ENCODE measurements at regions of chr10 and their contacts with region 1.

Region 1: GRCh38 chr10:5623081-5623748 is 43.2 kb downstream of the ASB13 start:
- DNase-seq: peak; percentile 74
- ATAC-seq: peak; percentile 99
- H3K4me3 ChIP-seq: no peak overlapping the region
- H3K27ac ChIP-seq: peak overlapping the region; percentile 34; the same call in 1 of the 2 replicates
- H3K4me1 ChIP-seq: peaks cover 2% of the 10 kb centered on the region
- H3K27me3 ChIP-seq: no peaks in the 10 kb centered on the region
- CTCF ChIP-seq: peak; percentile 90
- POLR2A ChIP-seq: 0 out of 2 replicates have a peak, but pooled peaks have one; percentile 44
- RAD21 ChIP-seq: peak; percentile 99

Region 2: GRCh38 chr10:4819707-4820106 is 803.5 kb before region 1 on chr10:
- CTCF ChIA-PET with region 1: no interaction called
- POLR2A ChIA-PET with region 1: no interaction called
- dilution Hi-C with region 1: no loop called
- in situ Hi-C with region 1: no loop called
- intact Hi-C with region 1: loop called (anchors 5 kb)
- DNase-seq: no peak
- ATAC-seq: no peak
- H3K4me3 ChIP-seq: no peak overlapping the region
- H3K27ac ChIP-seq: no peak overlapping the region
- H3K4me1 ChIP-seq: no peaks in the 10 kb centered on the region
- H3K27me3 ChIP-seq: no peaks in the 10 kb centered on the region
- CTCF ChIP-seq: no peak
- POLR2A ChIP-seq: no peak
- RAD21 ChIP-seq: no peak

Region 3: DNA sequence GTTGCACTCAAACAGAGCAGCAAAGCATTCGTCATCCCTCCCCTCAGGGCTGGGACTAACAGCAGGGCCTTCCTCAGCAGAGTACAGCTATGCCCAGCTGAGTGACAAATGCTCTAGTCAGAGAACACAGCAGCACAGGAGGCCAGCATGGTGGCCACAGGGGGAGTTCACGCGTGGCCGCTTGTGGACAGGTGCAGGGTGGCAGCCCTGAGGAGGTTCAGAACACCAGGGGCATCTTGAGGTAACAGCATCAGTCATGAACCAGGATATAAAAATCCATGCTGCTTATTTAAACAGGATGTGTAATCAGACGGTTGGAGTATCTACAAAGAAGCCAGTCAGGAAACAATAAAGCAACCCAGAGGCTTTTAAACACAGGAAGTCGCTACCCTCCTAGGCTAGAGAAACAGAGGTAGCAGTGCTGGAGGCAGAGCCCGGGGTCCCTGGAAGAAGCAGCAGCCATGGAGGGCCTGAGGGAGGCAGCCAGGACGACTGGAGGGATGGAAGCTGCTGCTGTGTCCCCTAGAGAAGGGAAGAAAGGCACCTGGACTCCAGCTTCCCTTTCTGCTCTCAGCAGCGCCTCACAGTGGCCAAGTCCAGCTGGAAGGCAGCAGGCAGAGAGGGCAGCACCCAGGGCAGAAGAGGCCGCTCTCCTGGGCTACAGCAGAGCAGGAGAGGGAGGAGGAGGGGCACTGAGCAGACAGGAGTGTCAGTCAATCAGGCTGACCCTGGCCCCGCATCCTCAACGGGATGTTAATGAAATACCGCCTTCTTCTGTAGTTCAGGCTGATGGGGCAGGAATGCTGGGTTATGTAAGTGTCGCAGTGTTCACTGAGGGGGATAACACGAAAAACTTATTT is 329.3 kb before region 1 on chr10:
- CTCF ChIA-PET with region 1: no interaction called
- POLR2A ChIA-PET with region 1: no interaction called
- dilution Hi-C with region 1: no loop called
- in situ Hi-C with region 1: no loop called
- intact Hi-C with region 1: loop called (anchors 10 kb)
- DNase-seq: peak; percentile 33
- ATAC-seq: peak; percentile 62
- H3K4me3 ChIP-seq: no peak overlapping the region
- H3K27ac ChIP-seq: no peak overlapping the region
- H3K4me1 ChIP-seq: peaks cover 8% of the 10 kb centered on the region
- H3K27me3 ChIP-seq: 0 out of 2 replicates have a peak, but pooled peaks cover 1% of the 10 kb centered on the region
- CTCF ChIP-seq: peak; percentile 32
- POLR2A ChIP-seq: no peak
- RAD21 ChIP-seq: peak; percentile 17; the same call in 1 of the 2 replicates

Region 4: DNA sequence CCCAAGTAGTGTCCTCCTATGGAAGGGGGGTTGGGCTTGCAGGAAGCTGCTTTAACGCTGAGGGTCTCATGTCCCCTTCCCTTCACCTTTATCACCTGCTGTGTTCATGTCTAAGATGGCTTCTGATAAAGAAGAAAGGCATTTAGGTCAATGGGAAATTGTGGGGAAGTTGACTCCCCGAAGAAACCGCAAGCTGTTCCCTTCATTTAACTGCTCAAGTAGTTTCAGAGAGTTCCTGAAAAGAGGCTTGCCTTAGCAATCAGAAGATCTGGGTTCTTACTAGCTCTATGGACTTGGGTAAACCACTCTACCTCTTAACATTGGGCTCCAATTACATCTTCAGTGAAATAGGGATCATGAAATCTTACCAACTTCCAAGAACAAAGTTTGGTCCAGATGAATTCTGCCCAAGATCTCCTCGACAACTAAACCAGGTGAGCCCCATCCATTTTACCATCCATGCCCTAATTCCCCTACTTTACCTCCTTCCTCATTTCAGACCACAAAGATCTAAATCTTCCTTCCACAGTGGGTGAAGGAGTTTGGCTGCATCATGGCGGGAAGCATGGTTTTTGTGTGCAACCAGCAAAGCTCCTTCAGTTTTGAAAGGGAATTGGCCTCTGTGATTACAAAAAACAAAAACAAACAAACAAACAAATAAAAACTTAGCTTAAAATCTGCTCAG is 288.9 kb before region 1 on chr10:
- CTCF ChIA-PET with region 1: no interaction called
- POLR2A ChIA-PET with region 1: no interaction called
- dilution Hi-C with region 1: no loop called
- in situ Hi-C with region 1: no loop called
- intact Hi-C with region 1: no loop called
- DNase-seq: no peak
- ATAC-seq: no peak
- H3K4me3 ChIP-seq: no peak overlapping the region
- H3K27ac ChIP-seq: no peak overlapping the region
- H3K4me1 ChIP-seq: no peaks in the 10 kb centered on the region
- H3K27me3 ChIP-seq: no peaks in the 10 kb centered on the region
- CTCF ChIP-seq: no peak
- POLR2A ChIP-seq: no peak
- RAD21 ChIP-seq: no peak

Region 5: GRCh38 chr10:5385224-5385623 is 238.0 kb before region 1 on chr10:
- CTCF ChIA-PET with region 1: no interaction called
- POLR2A ChIA-PET with region 1: no interaction called
- dilution Hi-C with region 1: no loop called
- in situ Hi-C with region 1: no loop called
- intact Hi-C with region 1: loop called (anchors 5 kb)
- DNase-seq: no peak
- ATAC-seq: no peak
- H3K4me3 ChIP-seq: no peak overlapping the region
- H3K27ac ChIP-seq: no peak overlapping the region
- H3K4me1 ChIP-seq: no peaks in the 10 kb centered on the region
- H3K27me3 ChIP-seq: peaks cover 7% of the 10 kb centered on the region
- CTCF ChIP-seq: no peak
- POLR2A ChIP-seq: no peak
- RAD21 ChIP-seq: no peak

Region 6: DNA sequence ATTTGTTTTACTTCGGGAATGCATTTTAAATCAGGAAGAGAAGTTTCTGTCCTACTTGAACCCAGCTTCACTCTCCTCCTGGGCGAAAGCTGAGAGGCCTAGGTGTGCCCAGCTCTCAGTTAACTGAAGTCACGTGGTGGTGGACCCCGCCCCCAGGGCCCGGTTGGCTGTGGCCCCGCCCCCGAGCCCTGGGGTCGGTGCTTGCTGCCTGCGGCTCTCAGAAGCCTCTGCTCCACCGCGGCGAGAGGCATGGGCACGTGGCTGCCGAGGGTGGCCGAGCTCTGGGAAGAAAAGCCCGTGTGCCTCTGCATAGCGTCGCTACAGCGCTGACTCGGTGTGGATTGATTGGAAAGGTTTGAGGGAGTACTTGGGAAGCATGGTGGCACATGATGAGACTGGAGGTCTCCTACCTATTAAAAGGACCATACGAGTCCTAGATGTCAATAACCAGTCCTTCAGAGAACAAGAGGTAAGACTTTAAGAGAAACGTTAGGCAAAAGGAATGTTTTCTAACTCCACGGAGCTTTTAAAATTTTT is 176.8 kb before region 1 on chr10:
- CTCF ChIA-PET with region 1: interaction called, 48 read pairs
- POLR2A ChIA-PET with region 1: interaction called, 3 read pairs
- dilution Hi-C with region 1: no loop called
- in situ Hi-C with region 1: loop called (anchors 5 kb)
- intact Hi-C with region 1: loop called (anchors 1 kb)
- DNase-seq: peak; percentile 84
- ATAC-seq: peak; percentile 91
- H3K4me3 ChIP-seq: peak overlapping the region; percentile 64
- H3K27ac ChIP-seq: peak overlapping the region; percentile 74
- H3K4me1 ChIP-seq: peaks cover 5% of the 10 kb centered on the region; the same call in 1 of the 2 replicates
- H3K27me3 ChIP-seq: no peaks in the 10 kb centered on the region
- CTCF ChIP-seq: no peak
- POLR2A ChIP-seq: peak; percentile 98
- RAD21 ChIP-seq: peak; percentile 5; the same call in 1 of the 2 replicates

Region 7: GRCh38 chr10:5548527-5549223 is 74.5 kb before region 1 on chr10:
- CTCF ChIA-PET with region 1: interaction called, 5 read pairs
- POLR2A ChIA-PET with region 1: no interaction called
- dilution Hi-C with region 1: no loop called
- in situ Hi-C with region 1: no loop called
- intact Hi-C with region 1: loop called (anchors 5 kb)
- DNase-seq: peak; percentile 99
- ATAC-seq: peak; percentile 76
- H3K4me3 ChIP-seq: no peak overlapping the region
- H3K27ac ChIP-seq: peak overlapping the region; percentile 82
- H3K4me1 ChIP-seq: peaks cover 52% of the 10 kb centered on the region
- H3K27me3 ChIP-seq: no peaks in the 10 kb centered on the region
- CTCF ChIP-seq: no peak
- POLR2A ChIP-seq: no peak; the same call in 1 of the 2 replicates
- RAD21 ChIP-seq: no peak

Region 8: DNA sequence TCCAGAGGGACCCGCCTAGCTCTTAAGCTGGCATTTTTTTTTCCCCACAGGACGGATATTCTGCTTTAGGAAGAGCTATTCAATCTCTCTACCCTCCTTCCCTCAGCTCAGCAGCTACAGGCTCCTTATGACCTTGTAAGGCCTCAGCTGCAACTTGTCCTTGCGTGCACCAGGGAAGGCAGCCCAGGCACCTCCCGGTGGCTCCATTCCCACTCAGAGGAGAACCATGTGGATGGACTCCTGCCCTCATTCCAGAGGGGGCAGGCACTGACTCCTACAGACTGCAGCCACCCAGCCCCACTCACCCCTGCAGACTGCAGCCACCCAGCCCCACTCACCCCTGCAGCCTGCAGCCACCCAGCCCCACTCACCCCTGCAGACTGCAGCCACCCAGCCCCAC is 1969.8 kb after region 1 on chr10:
- CTCF ChIA-PET with region 1: no interaction called
- POLR2A ChIA-PET with region 1: no interaction called
- dilution Hi-C with region 1: no loop called
- in situ Hi-C with region 1: no loop called
- intact Hi-C with region 1: no loop called
- DNase-seq: no peak
- ATAC-seq: no peak; the same call in 1 of the 2 replicates
- H3K4me3 ChIP-seq: no peak overlapping the region
- H3K27ac ChIP-seq: no peak overlapping the region
- H3K4me1 ChIP-seq: no peaks in the 10 kb centered on the region
- H3K27me3 ChIP-seq: no peaks in the 10 kb centered on the region; the same call in 1 of the 2 replicates
- CTCF ChIP-seq: no peak
- POLR2A ChIP-seq: no peak
- RAD21 ChIP-seq: no peak

Measured in IMR-90 (cell line).